H1 (cell line): ENCODE measurements at regions of chr1 and their contacts with region 1.

Region 1: GRCh38 chr1:151520359-151520758 is 9.2 kb downstream of the CGN start:
- DNase-seq: no peak
- H3K4me3 ChIP-seq: no peak overlapping the region
- H3K27ac ChIP-seq: no peak overlapping the region
- H3K4me1 ChIP-seq: peaks cover 1 to 7% (median 3%) of the 10 kb centered on the region in 4 experiments; a peak in 3 of 7 replicates
- H3K27me3 ChIP-seq: no peaks in the 10 kb centered on the region
- CTCF ChIP-seq: no peak
- EP300 ChIP-seq: no peak
- POLR2A ChIP-seq: no peak
- RAD21 ChIP-seq: no peak; a peak in 1 of 4 replicates

Region 2: GRCh38 chr1:151534665-151535278 is 14.4 kb after region 1 on chr1:
- CTCF ChIA-PET with region 1: interaction called, 54 read pairs
- POLR2A ChIA-PET with region 1: interaction called, 283 read pairs
- DNase-seq: peak in 1 of 2 experiments; percentile 93
- H3K4me3 ChIP-seq: no peak overlapping the region
- H3K27ac ChIP-seq: no peak overlapping the region
- H3K4me1 ChIP-seq: peaks cover 0 to 5% (median 5%) of the 10 kb centered on the region in 4 experiments; a peak in 6 of 7 replicates
- H3K27me3 ChIP-seq: no peaks in the 10 kb centered on the region
- CTCF ChIP-seq: peak; percentile 85 to 96 (median 96)
- EP300 ChIP-seq: no peak
- POLR2A ChIP-seq: no peak
- RAD21 ChIP-seq: peak; percentile 85 to 91

Region 3: GRCh38 chr1:151585622-151586021 is 65.3 kb after region 1 on chr1:
- CTCF ChIA-PET with region 1: no interaction called
- POLR2A ChIA-PET with region 1: no interaction called
- DNase-seq: no peak
- H3K4me3 ChIP-seq: no peak overlapping the region
- H3K27ac ChIP-seq: no peak overlapping the region
- H3K4me1 ChIP-seq: peaks cover 0 to 2% (median 0%) of the 10 kb centered on the region in 4 experiments; a peak in 1 of 7 replicates
- H3K27me3 ChIP-seq: no peaks in the 10 kb centered on the region
- CTCF ChIP-seq: no peak
- EP300 ChIP-seq: no peak
- POLR2A ChIP-seq: no peak
- RAD21 ChIP-seq: no peak